ENCODE measurements at regions of chr14 and their contacts with region 1.

Region 1: DNA sequence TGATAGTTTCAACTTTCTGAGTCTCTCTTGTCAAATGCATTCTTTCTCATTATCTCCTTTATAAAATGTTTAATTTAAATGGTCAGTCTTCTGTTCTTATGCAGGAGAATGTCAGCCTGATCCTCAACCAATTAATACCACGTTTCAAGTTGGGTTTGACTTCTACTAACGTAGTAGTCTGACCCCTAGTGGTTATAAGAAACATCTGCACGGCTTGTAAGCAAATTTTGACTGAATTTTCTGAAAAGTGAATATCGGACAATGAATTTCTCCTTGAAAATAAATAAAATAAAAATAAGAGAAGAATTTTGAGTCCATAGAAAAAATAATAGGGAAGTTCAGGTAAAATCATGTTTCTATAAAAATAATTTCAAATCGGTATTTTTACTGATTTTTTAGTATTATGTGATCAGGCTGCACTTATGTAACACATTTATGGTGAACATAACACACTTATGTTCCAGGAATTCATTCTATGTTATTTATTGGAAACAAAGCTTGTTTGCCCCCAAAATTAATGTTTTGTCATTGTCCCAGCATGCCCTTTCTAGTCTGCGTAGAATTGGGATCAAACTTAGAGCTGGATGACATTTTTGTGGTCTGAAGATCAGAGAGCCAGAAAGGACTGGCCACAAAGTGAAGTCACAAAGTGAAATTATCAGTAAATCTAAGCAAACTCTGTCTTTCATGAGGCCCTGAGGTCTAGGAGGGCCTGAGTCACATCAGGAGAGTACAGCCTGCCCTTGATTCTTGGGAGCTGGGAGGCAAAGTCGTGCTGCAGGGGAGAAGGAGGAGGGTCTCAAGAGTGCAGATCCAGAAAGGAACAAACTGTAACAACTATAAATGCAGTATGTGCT is 101.2 kb upstream of the STXBP6 start:
- DNase-seq: peak; percentile 14 to 51 (median 34)
- H3K4me3 ChIP-seq: no peak overlapping the region
- H3K4me3 Mint-ChIP-seq: no peak overlapping the region
- H3K27ac ChIP-seq: no peak overlapping the region
- H3K27ac Mint-ChIP-seq: no peak overlapping the region
- H3K4me1 ChIP-seq: no peaks in the 10 kb centered on the region
- H3K4me1 Mint-ChIP-seq: no peaks in the 10 kb centered on the region
- H3K27me3 ChIP-seq: no peaks in the 10 kb centered on the region
- H3K27me3 Mint-ChIP-seq: peaks cover 5 to 12% (median 5%) of the 10 kb centered on the region in 3 donors
- CTCF ChIP-seq: peak; percentile 85

Region 2: GRCh38 chr14:24734878-24735500 is 416.2 kb before region 1 on chr14:
- intact Hi-C with region 1: loop called (anchors 5 kb)
- DNase-seq: peak; percentile 17 to 54 (median 48)
- H3K4me3 ChIP-seq: no peak overlapping the region
- H3K4me3 Mint-ChIP-seq: no peak overlapping the region
- H3K27ac ChIP-seq: no peak overlapping the region
- H3K27ac Mint-ChIP-seq: no peak overlapping the region
- H3K4me1 ChIP-seq: no peaks in the 10 kb centered on the region
- H3K4me1 Mint-ChIP-seq: peaks cover 5% of the 10 kb centered on the region
- H3K27me3 ChIP-seq: no peaks in the 10 kb centered on the region
- H3K27me3 Mint-ChIP-seq: peaks cover 0 to under 1% (median 0%) of the 10 kb centered on the region in 3 donors
- CTCF ChIP-seq: peak; percentile 89

Region 3: DNA sequence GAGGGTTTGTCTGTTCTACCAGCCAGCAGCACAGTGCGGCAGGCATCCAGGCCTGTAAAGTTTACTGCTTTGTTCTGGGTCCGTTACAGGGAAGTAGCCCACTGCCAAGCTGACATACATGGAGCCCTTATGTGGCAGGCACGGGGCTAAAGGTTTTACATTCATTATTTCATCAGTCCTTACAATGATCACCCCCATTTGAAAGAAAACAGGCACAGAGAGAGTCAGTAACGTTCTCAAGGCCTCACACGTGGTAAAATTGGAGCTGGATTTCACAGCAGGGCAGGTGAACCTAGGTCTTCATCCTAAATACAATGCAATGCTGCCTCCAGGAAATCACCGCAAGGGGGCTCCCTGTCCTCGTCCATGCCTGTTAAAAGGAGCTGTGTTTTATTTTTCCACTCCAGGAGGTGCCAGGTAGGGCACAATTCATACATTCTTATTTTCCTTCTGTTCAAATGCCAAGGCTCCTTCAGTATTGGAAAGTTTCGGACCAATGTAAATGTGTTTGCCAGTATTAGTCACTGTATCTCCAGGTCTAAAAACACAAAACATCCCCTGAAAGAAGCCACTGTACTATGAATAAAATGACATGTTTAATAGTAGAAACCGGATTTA is 345.0 kb before region 1 on chr14:
- intact Hi-C with region 1: loop called in 1 of 2 experiments (anchors 5 kb)
- DNase-seq: peak; percentile 6 to 40 (median 14)
- H3K4me3 ChIP-seq: no peak overlapping the region
- H3K4me3 Mint-ChIP-seq: no peak overlapping the region
- H3K27ac ChIP-seq: no peak overlapping the region
- H3K27ac Mint-ChIP-seq: no peak overlapping the region
- H3K4me1 ChIP-seq: no peaks in the 10 kb centered on the region
- H3K4me1 Mint-ChIP-seq: no peaks in the 10 kb centered on the region
- H3K27me3 ChIP-seq: no peaks in the 10 kb centered on the region
- H3K27me3 Mint-ChIP-seq: peaks cover 2 to 13% (median 10%) of the 10 kb centered on the region in 3 donors
- CTCF ChIP-seq: peak; percentile 85